AG04450 (cell line): ENCODE measurements at regions of chr1 and their contacts with region 1.

Region 1: DNA sequence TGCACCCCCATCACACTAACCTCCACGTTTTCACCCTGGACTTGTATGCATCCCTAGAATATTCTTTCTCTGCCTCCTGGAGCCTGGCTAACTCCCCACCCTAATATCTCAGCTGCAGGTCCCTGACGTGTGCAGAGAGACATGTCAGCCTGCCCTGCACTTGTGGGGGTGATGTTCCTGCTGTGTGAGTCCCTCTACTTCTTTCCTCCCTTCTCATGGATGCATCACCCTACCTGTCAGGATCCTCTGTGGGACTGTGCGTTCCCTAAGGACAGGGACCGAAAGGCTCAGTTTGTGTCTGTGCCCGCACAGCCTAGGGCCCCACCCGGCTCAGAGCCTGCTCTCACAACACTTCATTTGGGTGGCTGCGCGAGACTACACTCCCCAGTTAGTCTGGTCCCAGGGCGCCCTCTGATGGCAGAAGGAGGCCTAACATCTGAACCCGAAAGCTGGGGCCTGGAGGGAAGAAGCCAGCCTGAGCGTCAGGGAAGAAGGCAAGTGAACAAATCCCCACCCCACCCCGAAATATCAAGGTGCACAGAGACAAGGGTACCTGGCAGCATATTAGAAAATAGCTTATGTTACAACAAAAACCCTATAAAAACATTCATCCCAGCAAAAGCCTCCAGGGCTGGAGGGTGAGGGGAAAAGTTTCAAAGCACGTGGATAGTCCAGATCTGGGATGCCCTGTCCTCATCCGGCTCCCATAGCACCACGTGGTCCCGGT is 3.7 kb downstream of the CD52 start:
- DNase-seq: peak; percentile 52
- H3K4me3 ChIP-seq: no peak overlapping the region
- H3K27ac ChIP-seq: no peak overlapping the region
- H3K27me3 ChIP-seq: no peaks in the 10 kb centered on the region
- CTCF ChIP-seq: peak; percentile 88

Region 2: GRCh38 chr1:26169669-26170471 is 151.6 kb before region 1 on chr1 and contains the start of gene ZNF593:
- CTCF ChIA-PET with region 1: interaction called, 10 read pairs
- POLR2A ChIA-PET with region 1: no interaction called
- DNase-seq: peak; percentile 62
- H3K4me3 ChIP-seq: peak within 1 kb of the TSS; percentile 87
- H3K27ac ChIP-seq: peak within 1 kb of the TSS; percentile 52
- H3K27me3 ChIP-seq: peaks cover 5% of the 10 kb centered on the region
- CTCF ChIP-seq: peak; percentile 83
- polyA plus RNA-seq, gene ZNF593: 19.7 and 28.6 TPM in 2 replicates

Region 3: DNA sequence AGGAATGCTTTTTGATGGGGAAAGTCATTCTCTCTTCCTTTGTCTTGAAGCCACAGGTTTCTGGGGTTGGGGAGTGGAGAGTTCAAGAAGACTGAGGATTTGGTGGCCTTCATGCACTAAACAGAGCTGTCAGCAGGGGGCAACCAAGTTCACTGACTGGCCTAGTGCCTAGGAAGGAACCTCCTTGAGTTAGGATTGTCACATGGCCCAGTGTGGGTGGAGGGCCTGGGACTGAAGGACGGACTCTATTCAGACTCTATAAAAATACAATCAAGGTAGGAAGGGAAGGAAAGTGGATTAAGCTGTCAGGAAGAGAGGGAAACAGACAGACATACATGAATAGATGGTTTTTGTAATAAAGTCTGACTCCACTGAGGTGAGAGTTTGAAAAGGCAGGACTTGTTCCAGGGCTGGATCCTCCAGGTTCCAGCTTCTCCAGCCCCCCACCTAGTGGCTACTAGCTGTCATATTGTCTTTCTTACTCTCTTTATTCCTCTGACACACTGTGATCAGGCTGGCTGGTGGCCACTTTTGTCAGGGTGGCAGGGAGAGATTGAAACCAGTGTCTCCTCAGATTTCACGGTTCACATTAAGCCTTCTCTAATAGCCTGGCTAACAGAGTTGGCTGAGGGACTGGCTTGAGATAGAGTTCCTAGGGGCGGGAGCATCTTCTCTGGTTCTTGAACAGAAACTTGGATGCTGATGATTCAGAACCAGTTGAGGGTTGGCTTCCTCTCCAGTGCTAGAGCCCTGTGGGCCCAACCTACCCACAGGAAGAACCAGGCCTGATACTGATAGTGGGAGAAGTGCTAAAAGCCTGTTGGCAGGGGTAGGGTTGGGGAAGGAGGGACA is 45.7 kb before region 1 on chr1:
- CTCF ChIA-PET with region 1: interaction called, 62 read pairs
- POLR2A ChIA-PET with region 1: interaction called, 5 read pairs
- DNase-seq: peak; percentile 77
- H3K4me3 ChIP-seq: no peak overlapping the region
- H3K27ac ChIP-seq: peak overlapping the region; percentile 61
- H3K27me3 ChIP-seq: no peaks in the 10 kb centered on the region
- CTCF ChIP-seq: peak; percentile 78

Region 4: DNA sequence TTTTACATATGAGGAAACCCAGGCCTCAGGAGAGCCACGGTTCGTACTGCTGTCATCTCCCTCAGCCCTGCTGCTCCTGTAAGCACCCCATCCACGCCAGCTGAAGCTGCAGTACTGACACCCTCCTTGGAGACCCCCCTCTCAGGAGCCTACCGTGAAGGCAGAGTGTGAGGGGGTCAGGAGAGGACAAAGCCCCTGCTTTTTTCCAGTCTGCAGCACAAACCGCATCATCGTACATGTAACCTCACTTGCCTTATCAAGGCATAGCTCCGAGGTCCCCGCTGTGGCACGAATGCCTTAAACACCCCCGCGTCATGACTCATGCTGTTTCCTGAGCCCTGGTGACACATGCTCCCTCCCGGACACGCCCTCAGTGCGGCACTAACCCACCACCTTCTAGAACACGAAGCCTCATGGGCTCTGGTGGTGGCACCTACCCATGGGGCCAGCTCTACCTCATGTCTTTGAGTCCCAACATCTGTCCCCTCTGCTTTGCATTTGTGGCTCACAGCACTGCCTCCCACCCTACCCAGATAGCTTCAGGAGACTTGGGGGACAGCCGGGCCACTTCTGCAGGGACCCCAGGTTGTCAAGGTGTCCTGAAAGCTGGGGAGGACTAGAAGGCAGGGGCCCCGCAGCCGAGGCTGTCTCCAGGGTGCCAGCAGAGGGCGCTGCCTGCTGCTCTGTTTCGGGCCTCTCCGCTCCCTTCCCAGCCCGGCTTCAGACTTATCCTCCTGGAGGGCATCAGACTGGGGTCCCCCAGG is 36.7 kb before region 1 on chr1:
- CTCF ChIA-PET with region 1: interaction called, 22 read pairs
- POLR2A ChIA-PET with region 1: interaction called, 3 read pairs
- DNase-seq: peak; percentile 70
- H3K4me3 ChIP-seq: no peak overlapping the region
- H3K27ac ChIP-seq: peak overlapping the region; percentile 84
- H3K27me3 ChIP-seq: no peaks in the 10 kb centered on the region
- CTCF ChIP-seq: peak; percentile 72

Region 5: DNA sequence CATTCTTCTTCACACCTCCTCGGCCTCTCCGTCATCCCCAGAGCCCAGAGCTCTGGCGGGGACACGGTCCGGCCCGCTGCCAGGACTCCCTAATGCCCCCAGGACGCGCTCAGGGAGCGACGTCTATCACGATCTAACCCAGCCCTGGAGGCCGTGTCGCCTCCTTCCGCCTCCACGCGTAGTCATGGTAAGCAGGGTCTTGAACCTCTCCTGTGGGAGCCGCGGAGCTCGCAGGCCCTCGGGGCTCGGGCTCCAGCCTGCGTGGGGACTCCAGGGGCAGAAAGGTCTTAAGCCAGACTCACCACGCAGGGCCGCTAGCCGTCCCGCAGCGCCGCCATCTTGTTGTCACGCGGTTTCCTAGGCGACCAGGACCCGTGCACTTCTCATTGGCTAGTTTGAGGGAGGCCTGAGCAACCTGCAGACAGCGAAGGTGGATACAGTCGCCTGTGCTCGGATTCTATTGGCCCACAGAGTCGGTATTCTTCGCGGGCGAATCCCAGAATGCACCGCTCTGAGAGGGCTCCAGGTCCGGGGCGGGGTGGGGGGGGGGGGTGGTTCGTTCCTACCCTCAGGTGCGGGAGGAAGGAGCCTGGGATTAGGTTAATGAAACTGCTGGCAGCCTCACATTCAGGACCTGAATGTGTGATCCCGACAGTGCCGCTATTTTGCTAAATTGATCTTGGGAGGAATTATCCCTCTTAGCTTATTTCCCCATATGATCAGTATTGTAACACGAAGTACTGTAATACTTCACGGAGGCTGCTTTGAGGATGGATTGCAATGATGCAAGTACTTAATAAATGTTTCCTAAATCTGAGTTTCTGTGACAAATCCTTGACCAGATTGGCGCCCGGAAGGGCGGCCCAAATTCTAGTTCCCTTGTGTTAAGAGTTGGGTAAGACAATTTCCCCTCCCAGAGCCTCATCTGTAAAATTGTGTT is 14.9 kb before region 1 on chr1 and contains the start of gene UBXN11:
- CTCF ChIA-PET with region 1: interaction called, 15 read pairs
- POLR2A ChIA-PET with region 1: no interaction called
- DNase-seq: peak; percentile 81
- H3K4me3 ChIP-seq: peak within 1 kb of the TSS; percentile 93
- H3K27ac ChIP-seq: peak within 1 kb of the TSS; percentile 31
- H3K27me3 ChIP-seq: no peaks in the 10 kb centered on the region
- CTCF ChIP-seq: peak; percentile 4; the same call in 1 of the 2 replicates
- polyA plus RNA-seq, gene UBXN11: 6.1 and 7.0 TPM in 2 replicates

Region 6: GRCh38 chr1:26336477-26337205 is 15.2 kb after region 1 on chr1:
- CTCF ChIA-PET with region 1: interaction called, 15 read pairs
- POLR2A ChIA-PET with region 1: no interaction called
- DNase-seq: no peak
- H3K4me3 ChIP-seq: peak overlapping the region; percentile 64
- H3K27ac ChIP-seq: no peak overlapping the region
- H3K27me3 ChIP-seq: peaks cover 41% of the 10 kb centered on the region
- CTCF ChIP-seq: no peak